ENCODE measurements at regions of chr12 and their contacts with region 1.

Region 1: DNA sequence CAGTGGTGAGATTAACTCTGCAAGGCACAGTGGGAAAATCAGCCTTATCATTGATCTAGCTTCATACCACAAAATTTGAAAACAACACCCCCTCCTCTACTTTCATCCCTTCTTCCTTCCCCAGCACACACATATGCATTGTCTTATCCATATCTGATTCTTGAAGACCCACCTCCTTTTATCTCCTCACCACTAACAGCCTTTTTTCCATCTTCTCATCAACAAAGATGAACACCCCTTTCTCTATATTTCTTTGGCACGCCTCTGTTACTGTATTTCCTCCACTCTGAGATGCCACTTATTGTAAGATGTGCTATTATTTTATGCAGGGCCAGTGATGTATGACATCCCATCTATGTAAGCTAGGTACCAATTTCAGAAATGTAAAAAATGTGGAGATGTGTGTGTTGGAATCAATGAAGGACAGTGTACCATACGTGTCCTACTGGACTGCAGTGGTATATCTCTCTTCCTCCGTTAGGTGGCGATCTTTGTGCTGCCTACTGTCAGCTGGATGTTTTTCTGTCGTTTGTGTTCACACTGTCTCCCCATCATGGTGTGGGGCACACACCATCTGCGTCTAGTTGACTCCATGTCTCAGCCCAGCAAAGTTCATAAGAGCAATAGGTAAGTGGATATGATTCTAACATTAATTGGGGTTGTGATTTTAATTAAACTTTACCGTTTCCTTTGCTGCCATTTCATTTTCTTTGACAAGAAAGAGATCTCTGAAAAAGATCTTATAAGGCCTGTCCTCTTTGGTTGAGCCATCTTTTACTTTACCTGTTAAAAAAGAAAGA is 24.0 kb downstream of the CCDC38 start:
- DNase-seq: peak; percentile 56 to 66
- H3K4me3 ChIP-seq: no peak overlapping the region
- H3K4me3 Mint-ChIP-seq: no peak overlapping the region
- H3K27ac Mint-ChIP-seq: no peak overlapping the region
- H3K4me1 ChIP-seq: no peaks in the 10 kb centered on the region
- H3K4me1 Mint-ChIP-seq: no peaks in the 10 kb centered on the region
- H3K27me3 ChIP-seq: no peaks in the 10 kb centered on the region
- H3K27me3 Mint-ChIP-seq: peaks cover 3% of the 10 kb centered on the region
- CTCF ChIP-seq: peak; percentile 81 to 88

Region 2: DNA sequence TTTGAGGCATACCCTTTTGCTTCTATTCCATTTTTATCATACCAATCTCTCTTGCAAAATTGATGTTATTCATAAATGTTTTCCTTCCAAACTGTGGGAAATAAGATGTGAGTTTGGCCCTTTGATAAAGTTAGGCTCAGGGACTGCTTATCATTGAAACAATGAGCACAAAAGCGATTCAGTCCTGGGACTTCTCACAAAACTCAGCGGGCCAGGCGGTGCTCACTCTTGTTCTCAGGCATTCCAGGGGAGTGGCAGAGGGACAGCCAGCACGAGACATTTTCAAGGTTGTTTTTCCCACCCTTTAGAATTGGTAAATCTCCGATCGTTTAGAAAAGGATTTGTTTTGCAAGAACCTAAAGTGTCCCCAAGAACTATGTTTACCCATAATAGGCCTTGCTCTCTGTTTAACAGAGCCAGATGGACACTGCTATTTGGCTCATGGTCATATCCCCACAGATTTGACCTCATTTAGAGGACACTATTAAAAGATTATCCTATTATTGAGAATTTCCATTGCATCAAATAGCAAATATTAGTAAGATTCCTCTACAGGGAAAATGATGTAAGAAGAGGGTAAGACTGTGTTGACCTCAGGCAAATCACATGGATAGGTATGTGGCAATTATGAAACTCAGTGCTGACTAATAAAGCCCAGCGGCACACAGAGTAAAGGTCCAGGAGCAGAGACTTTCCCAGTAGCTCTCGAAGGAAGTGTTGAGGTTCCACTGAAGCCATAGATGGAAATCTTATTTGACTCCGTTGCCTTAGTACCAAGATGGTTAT is 264.4 kb before region 1 on chr12:
- CTCF ChIA-PET with region 1: no interaction called
- POLR2A ChIA-PET with region 1: no interaction called
- intact Hi-C with region 1: no loop called
- DNase-seq: peak; percentile 40 to 76
- H3K4me3 ChIP-seq: no peak overlapping the region
- H3K4me3 Mint-ChIP-seq: peak overlapping the region; percentile 10
- H3K27ac Mint-ChIP-seq: peak overlapping the region; percentile 23
- H3K4me1 ChIP-seq: peaks cover 15% of the 10 kb centered on the region
- H3K4me1 Mint-ChIP-seq: peaks cover 33% of the 10 kb centered on the region
- H3K27me3 ChIP-seq: no peaks in the 10 kb centered on the region
- H3K27me3 Mint-ChIP-seq: no peaks in the 10 kb centered on the region
- CTCF ChIP-seq: no peak

Region 3: GRCh38 chr12:95942524-95943329 is 24.3 kb after region 1 on chr12 and contains the start of gene CCDC38:
- CTCF ChIA-PET with region 1: interaction called, 6 read pairs
- POLR2A ChIA-PET with region 1: no interaction called
- intact Hi-C with region 1: loop called (anchors 2 kb)
- DNase-seq: peak; percentile 62 to 73
- H3K4me3 ChIP-seq: peak within 1 kb of the TSS; percentile 55
- H3K4me3 Mint-ChIP-seq: peak within 1 kb of the TSS; percentile 91
- H3K27ac Mint-ChIP-seq: peak within 1 kb of the TSS; percentile 13
- H3K4me1 ChIP-seq: no peaks in the 10 kb centered on the region
- H3K4me1 Mint-ChIP-seq: no peaks in the 10 kb centered on the region
- H3K27me3 ChIP-seq: no peaks in the 10 kb centered on the region
- H3K27me3 Mint-ChIP-seq: peaks cover 3% of the 10 kb centered on the region
- CTCF ChIP-seq: no peak
- total RNA-seq, gene CCDC38: not detected in 2 replicates

Region 4: GRCh38 chr12:95959107-95959506 is 40.7 kb after region 1 on chr12:
- CTCF ChIA-PET with region 1: interaction called, 23 read pairs
- POLR2A ChIA-PET with region 1: no interaction called
- intact Hi-C with region 1: loop called (anchors 1 kb)
- DNase-seq: peak in 1 of 2 experiments; percentile 28
- H3K4me3 ChIP-seq: no peak overlapping the region
- H3K4me3 Mint-ChIP-seq: no peak overlapping the region
- H3K27ac Mint-ChIP-seq: no peak overlapping the region
- H3K4me1 ChIP-seq: no peaks in the 10 kb centered on the region
- H3K4me1 Mint-ChIP-seq: no peaks in the 10 kb centered on the region
- H3K27me3 ChIP-seq: no peaks in the 10 kb centered on the region
- H3K27me3 Mint-ChIP-seq: peaks cover 5% of the 10 kb centered on the region
- CTCF ChIP-seq: peak; percentile 15 to 33

Region 5: GRCh38 chr12:95998611-95999286 is 80.4 kb after region 1 on chr12:
- CTCF ChIA-PET with region 1: interaction called, 24 read pairs
- POLR2A ChIA-PET with region 1: no interaction called
- intact Hi-C with region 1: loop called (anchors 1 kb)
- DNase-seq: peak; percentile 55 to 58
- H3K4me3 ChIP-seq: no peak overlapping the region
- H3K4me3 Mint-ChIP-seq: no peak overlapping the region
- H3K27ac Mint-ChIP-seq: no peak overlapping the region
- H3K4me1 ChIP-seq: no peaks in the 10 kb centered on the region; the same call in 1 of the 2 replicates
- H3K4me1 Mint-ChIP-seq: peaks cover 20% of the 10 kb centered on the region
- H3K27me3 ChIP-seq: no peaks in the 10 kb centered on the region
- H3K27me3 Mint-ChIP-seq: no peaks in the 10 kb centered on the region
- CTCF ChIP-seq: peak; percentile 64 to 67